ENCODE measurements at regions of chr5 and their contacts with region 1.

Region 1: GRCh38 chr5:36728697-36729543 is 122.5 kb downstream of the SLC1A3 start:
- DNase-seq: peak; percentile 74
- ATAC-seq: no peak
- H3K4me3 ChIP-seq: no peak overlapping the region
- H3K4me3 Mint-ChIP-seq: no peak overlapping the region
- H3K27ac ChIP-seq: no peak overlapping the region
- H3K27ac Mint-ChIP-seq: no peak overlapping the region
- H3K4me1 ChIP-seq: peaks cover 16 to 17% of the 10 kb centered on the region in 2 donors
- H3K4me1 Mint-ChIP-seq: peaks cover 18% of the 10 kb centered on the region
- H3K27me3 ChIP-seq: no peaks in the 10 kb centered on the region
- H3K27me3 Mint-ChIP-seq: no peaks in the 10 kb centered on the region
- CTCF ChIP-seq: peak; percentile 85

Region 2: GRCh38 chr5:36241631-36242533 is 487.0 kb before region 1 on chr5 and contains the start of gene NADK2:
- CTCF ChIA-PET with region 1: interaction called, 8 read pairs
- POLR2A ChIA-PET with region 1: interaction called, 8 read pairs
- intact Hi-C with region 1: loop called (anchors 1 kb)
- DNase-seq: peak; percentile 96
- ATAC-seq: peak; percentile 83
- H3K4me3 ChIP-seq: peak within 1 kb of the TSS; percentile 41 to 91 (median 85)
- H3K4me3 Mint-ChIP-seq: peak within 1 kb of the TSS; percentile 92
- H3K27ac ChIP-seq: peak within 1 kb of the TSS; percentile 92 to 97
- H3K27ac Mint-ChIP-seq: peak within 1 kb of the TSS; percentile 98
- H3K4me1 ChIP-seq: peaks cover 18 to 19% of the 10 kb centered on the region in 2 donors
- H3K4me1 Mint-ChIP-seq: peaks cover 47% of the 10 kb centered on the region
- H3K27me3 ChIP-seq: no peaks in the 10 kb centered on the region
- H3K27me3 Mint-ChIP-seq: no peaks in the 10 kb centered on the region
- CTCF ChIP-seq: peak; percentile 79
- total RNA-seq, gene NADK2: 16.0 and 18.6 TPM in 2 replicates

Region 3: GRCh38 chr5:36695677-36696673 is 32.9 kb before region 1 on chr5:
- CTCF ChIA-PET with region 1: interaction called, 59 read pairs
- POLR2A ChIA-PET with region 1: no interaction called
- intact Hi-C with region 1: loop called (anchors 2 kb)
- DNase-seq: peak; percentile 59
- ATAC-seq: peak; percentile 52
- H3K4me3 ChIP-seq: no peak overlapping the region
- H3K4me3 Mint-ChIP-seq: no peak overlapping the region
- H3K27ac ChIP-seq: no peak overlapping the region
- H3K27ac Mint-ChIP-seq: peak overlapping the region; percentile 4
- H3K4me1 ChIP-seq: peaks cover 23 to 25% of the 10 kb centered on the region in 2 donors
- H3K4me1 Mint-ChIP-seq: peaks cover 28% of the 10 kb centered on the region
- H3K27me3 ChIP-seq: no peaks in the 10 kb centered on the region
- H3K27me3 Mint-ChIP-seq: peaks cover 4% of the 10 kb centered on the region
- CTCF ChIP-seq: peak; percentile 72

Region 4: GRCh38 chr5:36739751-36740221 is 10.9 kb after region 1 on chr5:
- CTCF ChIA-PET with region 1: interaction called, 32 read pairs
- POLR2A ChIA-PET with region 1: interaction called, 7 read pairs
- intact Hi-C with region 1: loop called (anchors 2 kb)
- DNase-seq: peak; percentile 77
- ATAC-seq: peak; percentile 78
- H3K4me3 ChIP-seq: no peak overlapping the region
- H3K4me3 Mint-ChIP-seq: no peak overlapping the region
- H3K27ac ChIP-seq: no peak overlapping the region
- H3K27ac Mint-ChIP-seq: no peak overlapping the region
- H3K4me1 ChIP-seq: peaks cover 11% of the 10 kb centered on the region in 2 donors
- H3K4me1 Mint-ChIP-seq: peaks cover 13% of the 10 kb centered on the region
- H3K27me3 ChIP-seq: peaks cover 0 to 17% (median 5%) of the 10 kb centered on the region in 4 experiments
- H3K27me3 Mint-ChIP-seq: peaks cover 27% of the 10 kb centered on the region
- CTCF ChIP-seq: peak; percentile 82

Region 5: GRCh38 chr5:36820900-36821299 is 92.0 kb after region 1 on chr5:
- CTCF ChIA-PET with region 1: no interaction called
- POLR2A ChIA-PET with region 1: no interaction called
- intact Hi-C with region 1: no loop called
- DNase-seq: no peak
- ATAC-seq: no peak
- H3K4me3 ChIP-seq: no peak overlapping the region
- H3K4me3 Mint-ChIP-seq: no peak overlapping the region
- H3K27ac ChIP-seq: no peak overlapping the region
- H3K27ac Mint-ChIP-seq: no peak overlapping the region
- H3K4me1 ChIP-seq: no peaks in the 10 kb centered on the region
- H3K4me1 Mint-ChIP-seq: no peaks in the 10 kb centered on the region
- H3K27me3 ChIP-seq: no peaks in the 10 kb centered on the region
- H3K27me3 Mint-ChIP-seq: peaks cover 22% of the 10 kb centered on the region
- CTCF ChIP-seq: no peak

Region 6: DNA sequence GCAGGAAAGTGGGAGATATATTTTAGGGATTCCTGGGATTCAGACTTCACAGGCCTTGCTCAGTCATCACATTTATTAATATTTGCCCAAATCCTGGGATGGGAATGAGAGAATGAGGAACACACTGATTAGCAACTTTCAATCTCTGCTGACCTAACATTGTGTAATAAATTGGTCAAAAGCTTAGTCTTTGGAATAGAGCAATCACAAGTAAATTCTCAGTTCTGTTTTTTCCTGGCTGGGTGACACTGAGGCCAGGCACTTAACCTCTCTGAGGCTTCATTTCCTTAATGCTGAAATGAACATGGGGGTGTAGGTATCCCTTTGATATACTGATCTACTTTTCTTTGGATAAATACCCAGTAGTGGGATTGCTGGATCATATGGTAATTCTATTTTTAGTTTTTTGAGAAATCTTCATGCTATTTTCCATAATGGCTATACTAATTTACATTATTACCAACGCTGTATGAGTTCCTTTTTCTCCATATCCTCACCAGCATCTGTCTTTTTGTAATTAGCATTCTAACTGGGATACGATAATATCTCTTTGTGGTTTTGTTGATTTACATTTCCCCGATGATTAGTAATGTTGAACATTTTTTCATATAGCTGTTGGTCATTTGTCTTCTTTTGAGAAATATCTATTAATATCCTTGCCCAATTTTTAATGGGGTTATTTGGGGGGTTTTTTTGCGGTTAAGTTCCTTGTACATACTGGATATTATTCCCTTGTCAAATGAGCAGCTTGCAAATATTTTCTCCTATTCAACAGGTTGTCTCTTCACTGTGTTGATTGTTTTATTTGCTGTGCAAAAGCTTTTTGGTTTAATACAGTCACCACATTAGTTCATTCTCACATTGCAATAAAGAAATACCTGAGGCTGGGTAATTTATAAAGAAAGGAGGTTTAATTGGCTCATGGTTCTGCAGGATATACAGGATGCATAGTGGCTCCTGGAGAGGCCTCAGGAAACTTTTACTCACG is 110.9 kb after region 1 on chr5:
- CTCF ChIA-PET with region 1: no interaction called
- POLR2A ChIA-PET with region 1: no interaction called
- intact Hi-C with region 1: no loop called
- DNase-seq: no peak
- ATAC-seq: no peak
- H3K4me3 ChIP-seq: no peak overlapping the region
- H3K4me3 Mint-ChIP-seq: no peak overlapping the region
- H3K27ac ChIP-seq: no peak overlapping the region
- H3K27ac Mint-ChIP-seq: no peak overlapping the region
- H3K4me1 ChIP-seq: peaks cover 6 to 7% of the 10 kb centered on the region in 2 donors
- H3K4me1 Mint-ChIP-seq: peaks cover 18% of the 10 kb centered on the region
- H3K27me3 ChIP-seq: no peaks in the 10 kb centered on the region
- H3K27me3 Mint-ChIP-seq: no peaks in the 10 kb centered on the region
- CTCF ChIP-seq: no peak

Region 7: GRCh38 chr5:36870399-36871040 is 141.6 kb after region 1 on chr5:
- CTCF ChIA-PET with region 1: interaction called, 17 read pairs
- POLR2A ChIA-PET with region 1: interaction called, 17 read pairs
- intact Hi-C with region 1: loop called (anchors 1 kb)
- DNase-seq: peak; percentile 80
- ATAC-seq: peak; percentile 83
- H3K4me3 ChIP-seq: no peak overlapping the region
- H3K4me3 Mint-ChIP-seq: no peak overlapping the region
- H3K27ac ChIP-seq: no peak overlapping the region
- H3K27ac Mint-ChIP-seq: no peak overlapping the region
- H3K4me1 ChIP-seq: peaks cover 14 to 22% of the 10 kb centered on the region in 2 donors
- H3K4me1 Mint-ChIP-seq: peaks cover 24% of the 10 kb centered on the region
- H3K27me3 ChIP-seq: no peaks in the 10 kb centered on the region
- H3K27me3 Mint-ChIP-seq: no peaks in the 10 kb centered on the region
- CTCF ChIP-seq: peak; percentile 83

Region 8: GRCh38 chr5:36944607-36945225 is 215.8 kb after region 1 on chr5:
- CTCF ChIA-PET with region 1: interaction called, 8 read pairs
- POLR2A ChIA-PET with region 1: no interaction called
- intact Hi-C with region 1: loop called (anchors 2 kb)
- DNase-seq: peak; percentile 71
- ATAC-seq: no peak
- H3K4me3 ChIP-seq: no peak overlapping the region
- H3K4me3 Mint-ChIP-seq: no peak overlapping the region
- H3K27ac ChIP-seq: no peak overlapping the region
- H3K27ac Mint-ChIP-seq: no peak overlapping the region
- H3K4me1 ChIP-seq: no peaks in the 10 kb centered on the region
- H3K4me1 Mint-ChIP-seq: peaks cover 42% of the 10 kb centered on the region
- H3K27me3 ChIP-seq: no peaks in the 10 kb centered on the region
- H3K27me3 Mint-ChIP-seq: no peaks in the 10 kb centered on the region
- CTCF ChIP-seq: peak; percentile 77

Region 9: GRCh38 chr5:37370864-37371726 is 642.2 kb after region 1 on chr5 and contains the start of gene NUP155:
- CTCF ChIA-PET with region 1: no interaction called
- POLR2A ChIA-PET with region 1: no interaction called
- intact Hi-C with region 1: loop called (anchors 5 kb)
- DNase-seq: peak; percentile 93
- ATAC-seq: peak; percentile 94
- H3K4me3 ChIP-seq: peak within 1 kb of the TSS; percentile 71 to 95 (median 94)
- H3K4me3 Mint-ChIP-seq: peak within 1 kb of the TSS; percentile 96
- H3K27ac ChIP-seq: peak within 1 kb of the TSS; percentile 83 to 92
- H3K27ac Mint-ChIP-seq: peak within 1 kb of the TSS; percentile 94
- H3K4me1 ChIP-seq: peaks cover 24% of the 10 kb centered on the region in 2 donors
- H3K4me1 Mint-ChIP-seq: peaks cover 30% of the 10 kb centered on the region
- H3K27me3 ChIP-seq: no peaks in the 10 kb centered on the region
- H3K27me3 Mint-ChIP-seq: no peaks in the 10 kb centered on the region
- CTCF ChIP-seq: no peak
- total RNA-seq, gene NUP155: 33.8 and 34.1 TPM in 2 replicates

Measured in B cell (primary cell).